ENCODE measurements at regions of chr11 and their contacts with region 1.

Region 1: GRCh38 chr11:72144807-72145560 is 9.5 kb downstream of the FOLR3 start:
- DNase-seq: no peak
- CTCF ChIP-seq: no peak

Region 2: DNA sequence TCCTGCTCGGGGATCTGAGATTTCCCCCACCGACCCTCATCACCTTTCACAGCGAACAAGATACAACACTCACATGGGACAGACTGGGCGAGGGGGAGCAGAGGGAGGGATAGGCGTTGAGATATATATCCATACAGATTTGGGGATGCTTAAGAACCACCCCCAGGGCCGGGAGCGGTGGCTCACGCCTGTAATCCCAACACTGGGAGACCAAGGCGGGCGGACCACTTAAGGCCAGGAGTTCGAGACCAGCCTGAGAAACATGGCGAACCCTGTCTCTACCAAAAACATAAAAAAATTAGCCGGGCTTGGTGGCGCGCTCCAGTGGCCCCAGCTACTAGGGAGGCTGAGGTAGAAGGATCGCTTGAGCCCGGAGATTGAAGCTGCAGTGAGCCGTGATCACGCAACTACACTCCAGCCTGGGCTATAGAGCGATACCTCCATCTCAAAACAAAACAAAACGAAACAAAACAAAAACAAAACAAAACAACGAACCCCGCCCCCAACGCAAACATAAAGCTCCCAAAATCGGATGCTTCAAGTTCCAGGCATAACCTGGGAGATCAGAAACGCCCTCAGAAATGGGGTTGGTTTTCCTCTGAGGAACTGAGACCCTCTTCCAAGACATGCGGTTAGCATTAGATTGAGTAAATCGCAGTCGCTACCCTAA is 63.9 kb before region 1 on chr11:
- CTCF ChIA-PET with region 1: interaction called, 13 read pairs
- POLR2A ChIA-PET with region 1: no interaction called
- DNase-seq: no peak
- CTCF ChIP-seq: no peak

Region 3: DNA sequence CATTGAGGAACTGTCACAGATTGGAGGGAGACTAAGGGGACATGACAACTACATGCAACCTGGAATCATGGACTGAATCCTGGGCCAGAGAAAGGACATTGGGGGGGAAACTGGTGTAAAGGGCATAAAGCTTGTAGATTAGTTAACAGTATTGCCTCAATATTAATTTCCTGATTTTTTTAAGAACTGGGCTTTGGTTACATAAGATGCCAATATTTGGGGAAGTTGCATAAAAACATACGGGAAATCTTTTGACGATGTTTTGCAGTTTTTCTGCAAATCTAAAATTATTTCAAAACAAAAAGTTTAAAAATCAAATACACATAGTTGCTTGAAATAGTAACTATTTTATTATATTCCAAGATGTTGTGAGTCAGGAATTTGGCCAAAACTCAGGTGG is 12.3 kb before region 1 on chr11:
- CTCF ChIA-PET with region 1: interaction called, 25 read pairs
- POLR2A ChIA-PET with region 1: no interaction called
- DNase-seq: no peak
- CTCF ChIP-seq: no peak

Region 4: GRCh38 chr11:72179804-72180396 is 34.9 kb after region 1 on chr11:
- CTCF ChIA-PET with region 1: interaction called, 16 read pairs
- POLR2A ChIA-PET with region 1: no interaction called
- DNase-seq: no peak
- CTCF ChIP-seq: no peak

Region 5: GRCh38 chr11:72483412-72484186 is 338.6 kb after region 1 on chr11:
- CTCF ChIA-PET with region 1: no interaction called
- POLR2A ChIA-PET with region 1: no interaction called
- DNase-seq: no peak
- CTCF ChIP-seq: no peak

Measured in GM10248 (cell line).